Calu3 (cell line): ENCODE measurements at regions of chr11 and their contacts with region 1.

Region 1: DNA sequence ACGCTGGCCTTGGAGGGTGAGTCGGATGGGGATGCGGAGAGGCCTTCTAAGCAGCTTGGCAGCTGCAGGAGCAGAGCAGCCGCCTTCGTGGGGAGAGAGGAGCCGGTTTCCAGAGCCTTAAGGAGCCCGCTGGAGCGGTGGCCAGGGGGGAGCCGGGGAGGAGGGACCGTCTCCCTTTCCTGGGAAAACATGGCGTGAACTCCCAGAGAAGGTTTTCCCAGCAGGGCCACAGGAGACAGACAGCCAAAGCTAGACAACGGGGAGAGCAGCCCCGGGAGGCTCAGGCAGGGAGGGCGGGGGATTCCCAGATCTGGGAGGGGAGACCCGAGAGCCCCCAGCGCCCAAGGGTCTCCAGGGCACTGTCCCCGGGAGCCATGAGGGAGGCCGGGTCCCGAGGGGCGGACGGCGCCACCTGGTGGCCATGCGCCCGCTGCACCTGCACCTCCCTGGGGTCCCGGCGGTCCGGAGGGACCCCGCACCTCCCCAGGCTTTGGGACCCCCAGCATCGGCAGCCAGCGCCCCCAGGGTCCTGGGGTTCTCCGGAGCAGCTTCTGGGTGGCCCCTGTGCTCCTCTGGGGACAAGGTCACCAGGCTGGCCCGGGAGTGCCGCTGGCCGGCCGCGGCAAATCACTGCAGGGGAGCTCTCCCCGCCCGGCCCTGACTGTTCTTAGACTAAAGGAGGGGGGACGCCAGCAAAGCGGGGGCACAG is 2.4 kb upstream of the SYT8 start:
- DNase-seq: peak; percentile 82
- H3K4me3 Mint-ChIP-seq: peak overlapping the region; percentile 31
- H3K27ac Mint-ChIP-seq: peak overlapping the region; percentile 67
- H3K4me1 Mint-ChIP-seq: peaks cover 67% of the 10 kb centered on the region
- H3K27me3 Mint-ChIP-seq: no peaks in the 10 kb centered on the region
- CTCF ChIP-seq: peak; percentile 98

Region 2: DNA sequence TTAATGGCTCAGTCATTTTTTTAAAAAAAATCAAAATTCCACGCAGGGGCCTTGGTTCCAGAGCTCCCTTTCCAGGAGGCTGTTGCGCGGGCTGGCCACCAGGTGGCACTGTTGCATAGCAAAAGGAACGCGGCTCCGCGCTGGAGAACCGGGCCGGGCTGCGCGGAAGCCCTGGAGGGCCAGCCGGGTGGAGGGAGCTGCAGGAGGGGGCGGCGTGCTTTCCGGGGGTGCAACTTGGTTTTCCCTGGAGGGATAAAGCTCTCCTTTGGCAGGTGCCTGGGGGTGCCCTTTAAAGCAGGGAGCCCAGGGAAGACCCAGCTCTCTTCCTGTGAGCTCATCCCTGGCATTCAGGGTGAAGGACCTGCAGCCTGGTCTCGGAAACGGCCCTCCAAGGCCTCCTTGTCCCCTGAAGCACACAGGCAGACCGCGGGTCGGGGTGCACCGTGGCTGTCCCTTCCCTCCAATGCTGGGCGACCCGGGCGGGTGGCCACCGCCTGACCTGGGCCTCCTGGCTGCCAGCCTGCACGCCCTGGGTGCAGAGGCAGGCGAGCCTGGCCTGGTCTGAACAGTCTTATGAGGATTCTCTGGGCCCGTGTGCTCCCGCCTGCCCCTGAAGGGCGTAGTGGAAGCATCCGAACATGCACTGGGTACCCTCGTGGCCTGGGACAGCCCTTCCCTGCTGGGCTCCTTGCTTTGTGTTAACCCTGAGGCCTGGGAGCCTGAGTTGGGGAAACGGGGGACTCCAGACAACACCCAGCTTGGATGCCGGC is 179.4 kb before region 1 on chr11:
- CTCF ChIA-PET with region 1: interaction called, 19 read pairs
- intact Hi-C with region 1: no loop called
- DNase-seq: peak; percentile 83
- H3K4me3 Mint-ChIP-seq: no peak overlapping the region
- H3K27ac Mint-ChIP-seq: no peak overlapping the region
- H3K4me1 Mint-ChIP-seq: no peaks in the 10 kb centered on the region
- H3K27me3 Mint-ChIP-seq: peaks cover 75% of the 10 kb centered on the region
- CTCF ChIP-seq: peak; percentile 98

Region 3: GRCh38 chr11:1694064-1694845 is 138.1 kb before region 1 on chr11:
- CTCF ChIA-PET with region 1: interaction called, 117 read pairs
- intact Hi-C with region 1: loop called (anchors 1 kb)
- DNase-seq: peak; percentile 94
- H3K4me3 Mint-ChIP-seq: peak overlapping the region; percentile 68
- H3K27ac Mint-ChIP-seq: no peak overlapping the region
- H3K4me1 Mint-ChIP-seq: peaks cover 16% of the 10 kb centered on the region
- H3K27me3 Mint-ChIP-seq: peaks cover 36% of the 10 kb centered on the region
- CTCF ChIP-seq: peak; percentile 92

Region 4: DNA sequence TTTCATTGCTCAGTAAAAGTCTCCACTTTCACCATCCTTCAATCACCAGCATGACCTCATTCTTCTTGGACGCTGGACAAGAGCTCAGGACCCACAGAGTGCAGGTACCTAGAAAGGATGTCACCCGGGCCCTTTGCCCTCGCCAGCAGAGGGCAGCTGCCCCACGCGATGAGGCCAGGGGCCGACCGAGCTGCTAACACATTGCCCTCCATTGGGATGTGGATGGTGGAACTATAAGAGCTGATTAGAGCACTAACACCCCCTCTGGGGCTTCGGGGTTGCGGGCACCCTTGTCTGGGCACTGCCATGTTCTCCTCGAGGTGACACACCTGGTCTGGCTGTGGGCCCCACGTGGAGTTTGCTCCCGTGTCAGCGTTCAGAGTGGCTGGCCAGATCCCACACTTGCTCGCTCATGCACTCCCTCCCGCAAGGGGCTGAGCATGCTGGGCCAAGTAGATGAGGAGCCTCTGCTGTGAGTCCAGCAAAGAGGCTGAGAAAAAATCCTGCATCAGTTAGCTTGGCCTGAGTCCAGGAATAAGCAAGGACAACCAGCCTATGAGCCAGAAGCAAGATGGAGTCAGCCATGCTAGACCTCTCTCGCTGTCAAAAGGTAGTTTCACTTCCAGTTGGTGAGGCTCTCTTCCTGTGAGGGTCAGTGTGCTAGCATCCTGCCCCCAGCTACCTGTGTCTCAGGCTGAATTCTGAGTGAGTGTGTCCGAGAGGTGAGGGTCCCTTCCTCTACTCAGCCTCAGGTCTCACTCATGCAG is 125.5 kb before region 1 on chr11:
- CTCF ChIA-PET with region 1: interaction called, 18 read pairs
- intact Hi-C with region 1: no loop called
- DNase-seq: peak; percentile 31
- H3K4me3 Mint-ChIP-seq: no peak overlapping the region
- H3K27ac Mint-ChIP-seq: no peak overlapping the region
- H3K4me1 Mint-ChIP-seq: peaks cover 27% of the 10 kb centered on the region
- H3K27me3 Mint-ChIP-seq: peaks cover 37% of the 10 kb centered on the region
- CTCF ChIP-seq: no peak

Region 5: GRCh38 chr11:1763796-1764661 is 68.3 kb before region 1 on chr11 and contains the start of gene CTSD:
- CTCF ChIA-PET with region 1: interaction called, 8 read pairs
- intact Hi-C with region 1: loop called (anchors 5 kb)
- DNase-seq: peak; percentile 91
- H3K4me3 Mint-ChIP-seq: peak within 1 kb of the TSS; percentile 74
- H3K27ac Mint-ChIP-seq: peak within 1 kb of the TSS; percentile 88
- H3K4me1 Mint-ChIP-seq: peaks cover 25% of the 10 kb centered on the region
- H3K27me3 Mint-ChIP-seq: no peaks in the 10 kb centered on the region
- CTCF ChIP-seq: no peak
- total RNA-seq, gene CTSD: 531 and 685 TPM in 2 replicates

Region 6: GRCh38 chr11:1778141-1778911 is 54.0 kb before region 1 on chr11:
- CTCF ChIA-PET with region 1: interaction called, 3 read pairs
- intact Hi-C with region 1: loop called (anchors 5 kb)
- DNase-seq: peak; percentile 75
- H3K4me3 Mint-ChIP-seq: peak overlapping the region; percentile 41
- H3K27ac Mint-ChIP-seq: peak overlapping the region; percentile 56
- H3K4me1 Mint-ChIP-seq: peaks cover 79% of the 10 kb centered on the region
- H3K27me3 Mint-ChIP-seq: no peaks in the 10 kb centered on the region
- CTCF ChIP-seq: no peak

Region 7: DNA sequence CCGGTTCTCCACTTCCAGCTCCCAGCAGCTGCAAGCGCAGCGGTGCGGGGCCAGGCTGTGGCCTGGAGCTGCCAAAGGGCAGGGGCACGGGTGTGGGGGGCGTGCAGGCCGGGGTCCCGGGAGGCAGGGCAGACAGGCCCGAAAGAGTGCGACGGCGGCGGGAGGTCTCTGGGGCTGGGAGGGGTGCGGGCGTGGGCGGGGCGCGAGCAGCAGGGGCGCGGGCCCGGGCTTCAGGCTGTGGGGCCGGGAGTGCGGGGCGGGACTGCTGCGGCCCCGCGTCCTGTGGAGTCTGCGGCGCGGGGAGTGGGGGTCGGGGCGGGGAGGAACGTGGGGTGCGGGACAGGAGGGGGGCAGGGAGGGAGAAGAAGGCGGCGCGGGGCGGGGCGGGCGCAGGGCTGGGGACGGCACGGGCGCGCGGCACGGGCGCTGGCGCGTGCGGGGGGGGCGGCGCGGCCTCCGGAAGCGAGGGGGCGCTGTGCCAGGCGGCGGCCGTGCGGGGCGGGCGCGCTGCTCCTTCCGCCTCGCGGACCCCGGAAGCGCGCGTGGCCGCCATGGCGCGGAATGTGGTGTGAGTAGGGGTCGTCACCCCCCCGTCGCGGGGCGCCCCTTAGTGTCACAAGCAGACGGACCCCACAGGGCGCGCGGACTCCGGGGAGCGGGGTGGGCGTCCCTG is 114.6 kb after region 1 on chr11 and contains the start of gene MRPL23:
- CTCF ChIA-PET with region 1: interaction called, 15 read pairs
- intact Hi-C with region 1: no loop called
- DNase-seq: peak; percentile 22
- H3K4me3 Mint-ChIP-seq: no peak within 1 kb of the TSS
- H3K27ac Mint-ChIP-seq: no peak within 1 kb of the TSS
- H3K4me1 Mint-ChIP-seq: peaks cover 9% of the 10 kb centered on the region
- H3K27me3 Mint-ChIP-seq: no peaks in the 10 kb centered on the region
- CTCF ChIP-seq: no peak
- total RNA-seq, gene MRPL23: 104 and 109 TPM in 2 replicates